Common myeloid progenitor, CD34-positive (primary cell): ENCODE measurements at regions of chr21 and their contacts with region 1.

Region 1: DNA sequence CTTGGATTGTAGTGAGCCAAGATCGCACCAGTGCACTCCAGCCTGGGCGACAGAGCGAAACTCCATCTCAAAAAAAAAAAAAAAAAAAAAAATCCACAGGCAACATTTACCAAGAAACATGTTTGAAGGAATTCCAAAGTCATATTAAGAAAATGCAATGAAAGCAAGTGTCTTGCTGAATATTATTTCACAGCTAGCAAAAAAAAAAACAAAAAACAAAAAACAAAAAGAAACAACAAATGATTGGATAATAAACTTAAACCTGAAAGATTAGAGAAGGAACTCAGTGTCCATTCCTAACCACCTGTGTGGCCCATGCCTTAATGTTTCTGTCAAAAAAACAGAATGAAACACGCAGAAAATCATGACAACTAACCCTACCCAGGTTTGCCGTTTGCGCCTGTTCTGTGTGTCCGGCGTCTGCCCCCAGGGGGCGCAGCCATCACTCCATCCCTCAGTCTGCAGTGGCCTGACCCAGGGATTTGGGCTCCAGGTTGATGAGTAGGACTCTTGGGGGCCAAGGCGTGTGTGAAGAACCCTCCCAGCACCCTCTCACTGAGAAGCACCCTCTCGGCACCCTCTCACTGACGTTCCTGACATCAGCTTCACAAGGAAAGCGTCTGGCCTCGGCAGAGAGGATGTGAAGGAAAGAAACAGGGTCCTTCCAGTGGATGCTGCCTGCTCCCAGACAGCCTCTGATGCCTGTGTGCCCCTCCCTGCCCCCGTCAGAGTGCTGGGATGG is 19.2 kb upstream of the PTTG1IP start:
- DNase-seq: peak in 2 of 3 donors; percentile 63 to 74
- H3K4me3 ChIP-seq: no peak overlapping the region
- H3K27ac ChIP-seq: no peak overlapping the region
- H3K4me1 ChIP-seq: peaks cover 0 to 4% (median 0%) of the 10 kb centered on the region in 4 experiments
- H3K27me3 ChIP-seq: no peaks in the 10 kb centered on the region

Region 2: GRCh38 chr21:44414291-44415072 is 478.2 kb before region 1 on chr21:
- CTCF ChIA-PET with region 1: no interaction called
- POLR2A ChIA-PET with region 1: no interaction called
- DNase-seq: no peak
- H3K4me3 ChIP-seq: no peak overlapping the region
- H3K27ac ChIP-seq: no peak overlapping the region
- H3K4me1 ChIP-seq: no peaks in the 10 kb centered on the region
- H3K27me3 ChIP-seq: no peaks in the 10 kb centered on the region

Region 3: GRCh38 chr21:44880762-44881585 is 11.7 kb before region 1 on chr21:
- CTCF ChIA-PET with region 1: interaction called, 50 read pairs
- POLR2A ChIA-PET with region 1: interaction called, 4 read pairs
- DNase-seq: peak; percentile 91 to 98 (median 95)
- H3K4me3 ChIP-seq: peak overlapping the region in 6 of 7 experiments; percentile 4 to 46 (median 25)
- H3K27ac ChIP-seq: peak overlapping the region; percentile 75 to 77
- H3K4me1 ChIP-seq: peaks cover 39 to 75% (median 68%) of the 10 kb centered on the region in 4 experiments
- H3K27me3 ChIP-seq: no peaks in the 10 kb centered on the region